ENCODE measurements at regions of chr6 and their contacts with region 1.

Region 1: GRCh38 chr6:35583893-35584688 is 71.4 kb upstream of the TULP1 start:
- DNase-seq: peak; percentile 50
- H3K4me3 Mint-ChIP-seq: no peak overlapping the region
- H3K27ac Mint-ChIP-seq: no peak overlapping the region
- H3K4me1 Mint-ChIP-seq: peaks cover 28% of the 10 kb centered on the region
- H3K27me3 Mint-ChIP-seq: no peaks in the 10 kb centered on the region

Region 2: GRCh38 chr6:35624341-35625070 is 40.4 kb after region 1 on chr6:
- intact Hi-C with region 1: loop called (anchors 5 kb)
- DNase-seq: no peak
- H3K4me3 Mint-ChIP-seq: no peak overlapping the region
- H3K27ac Mint-ChIP-seq: peak overlapping the region; percentile 12
- H3K4me1 Mint-ChIP-seq: peaks cover 6% of the 10 kb centered on the region
- H3K27me3 Mint-ChIP-seq: no peaks in the 10 kb centered on the region

Region 3: GRCh38 chr6:35663447-35664235 is 79.5 kb after region 1 on chr6:
- intact Hi-C with region 1: loop called (anchors 2 kb)
- DNase-seq: no peak
- H3K4me3 Mint-ChIP-seq: no peak overlapping the region
- H3K27ac Mint-ChIP-seq: no peak overlapping the region
- H3K4me1 Mint-ChIP-seq: peaks cover 8% of the 10 kb centered on the region
- H3K27me3 Mint-ChIP-seq: no peaks in the 10 kb centered on the region

Region 4: GRCh38 chr6:35688581-35689322 is 104.7 kb after region 1 on chr6 and contains the start of gene FKBP5:
- intact Hi-C with region 1: loop called (anchors 5 kb)
- DNase-seq: peak; percentile 86
- H3K4me3 Mint-ChIP-seq: peak within 1 kb of the TSS; percentile 92
- H3K27ac Mint-ChIP-seq: peak within 1 kb of the TSS; percentile 87
- H3K4me1 Mint-ChIP-seq: peaks cover 13% of the 10 kb centered on the region
- H3K27me3 Mint-ChIP-seq: no peaks in the 10 kb centered on the region
- total RNA-seq, gene FKBP5: 88.1 and 90.9 TPM in 2 replicates

Region 5: DNA sequence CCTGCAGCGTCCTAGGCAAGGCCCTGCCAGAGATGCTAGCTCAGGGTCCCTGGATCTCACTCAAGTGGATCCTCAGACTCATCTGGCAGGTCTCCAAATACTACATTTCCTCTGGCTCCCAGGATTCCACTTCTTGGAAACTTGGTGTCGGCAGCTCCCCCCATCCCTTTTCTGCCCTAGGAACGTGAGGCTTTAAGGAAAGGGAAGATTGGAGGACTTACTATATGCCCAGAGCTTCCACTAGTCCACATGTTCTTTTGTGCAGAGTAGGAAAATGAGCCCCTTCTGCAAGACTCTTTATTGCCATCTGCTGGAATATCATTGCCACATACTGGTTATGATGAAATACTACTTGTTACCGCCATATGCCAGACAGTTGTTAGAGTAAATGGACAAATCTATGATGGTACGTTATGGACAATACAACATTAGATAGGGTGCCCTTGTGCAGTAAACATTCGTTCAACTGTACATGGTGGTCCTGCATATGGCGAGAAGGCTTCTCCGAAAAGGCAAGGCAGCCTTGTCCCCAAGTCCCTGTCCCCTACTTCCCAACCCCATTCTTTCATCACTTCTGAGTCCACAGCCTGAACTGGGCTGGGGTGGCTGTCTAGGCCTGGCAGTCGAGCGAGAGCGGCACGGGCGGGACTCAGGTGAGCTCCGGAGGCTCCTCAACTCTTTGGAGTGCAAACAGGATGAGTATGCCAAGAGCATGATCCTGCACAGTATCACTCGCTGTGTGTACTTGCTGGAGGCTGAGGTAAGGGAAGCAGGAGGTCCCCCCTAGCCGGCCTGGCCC is 153.5 kb after region 1 on chr6:
- intact Hi-C with region 1: loop called (anchors 1 kb)
- DNase-seq: no peak
- H3K4me3 Mint-ChIP-seq: no peak overlapping the region
- H3K27ac Mint-ChIP-seq: peak overlapping the region; percentile 44
- H3K4me1 Mint-ChIP-seq: peaks cover 26% of the 10 kb centered on the region
- H3K27me3 Mint-ChIP-seq: no peaks in the 10 kb centered on the region

Measured in activated T-helper 2 cell treated with anti-CD3 and anti-CD28 coated beads, Interferon-gamma antibody, Interleukin-2, Interleukin-4, amounts not matched to agents 10 μg/mL and 5 μg/mL and 100 μg/mL, durations not matched to agents 14 hours and 24 hours and 36 hours (primary cell).